ENCODE measurements at regions of chr12 and their contacts with region 1.

Region 1: DNA sequence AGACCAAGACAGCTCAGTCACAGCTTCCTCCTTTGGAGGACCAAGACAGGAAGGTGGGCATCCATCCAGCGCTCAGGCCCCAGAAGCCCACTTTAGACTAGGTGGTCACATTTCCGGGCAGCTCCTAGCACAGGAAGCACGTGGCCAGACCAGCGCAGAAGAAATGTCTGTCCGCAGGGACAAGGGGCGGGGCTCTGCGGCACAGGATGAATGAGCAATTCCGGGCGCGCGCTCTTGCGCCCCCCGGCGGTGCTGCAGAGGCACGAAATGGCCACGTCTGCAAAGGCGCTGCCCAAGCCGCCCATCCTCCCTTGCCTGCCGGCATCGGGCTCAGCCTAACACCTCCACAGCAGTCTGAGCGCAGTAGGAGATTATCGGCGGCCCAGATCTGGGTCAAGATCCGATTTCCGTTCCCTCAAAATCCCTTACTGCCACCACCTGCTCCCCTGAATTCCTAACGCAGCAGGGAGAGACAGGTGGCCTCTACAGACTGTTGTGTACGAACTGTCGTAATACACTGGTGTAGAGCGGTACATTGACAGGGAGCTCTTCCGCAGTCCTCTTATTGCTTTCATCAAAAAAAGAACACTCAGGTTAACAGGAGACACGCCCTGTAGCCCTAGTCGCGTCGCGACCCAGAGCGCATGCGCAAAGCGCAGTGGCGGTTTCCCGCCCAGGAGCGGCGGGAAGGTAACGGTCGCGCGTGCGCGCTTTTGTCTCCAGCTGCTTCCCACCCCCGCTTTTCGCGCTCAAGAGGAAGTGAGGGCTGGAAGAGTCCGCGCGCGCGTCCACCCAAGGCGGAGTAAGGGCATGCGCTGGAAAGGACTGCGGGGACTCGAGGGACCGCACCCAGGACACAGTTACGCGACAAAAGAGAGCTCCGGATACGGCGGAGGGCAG is 794 bp downstream of the TUBA1B start:
- DNase-seq: peak; percentile 85 to 98 (median 93)
- ATAC-seq: peak; percentile 75
- H3K4me3 ChIP-seq: peak overlapping the region; percentile 91
- H3K4me3 Mint-ChIP-seq: peak overlapping the region; percentile 99
- H3K27ac ChIP-seq: peak overlapping the region; percentile 94 to 98
- H3K27ac Mint-ChIP-seq: peak overlapping the region; percentile 98
- H3K4me1 ChIP-seq: peaks cover 33% of the 10 kb centered on the region
- H3K4me1 Mint-ChIP-seq: peaks cover 52% of the 10 kb centered on the region
- H3K27me3 ChIP-seq: no peaks in the 10 kb centered on the region
- H3K27me3 Mint-ChIP-seq: no peaks in the 10 kb centered on the region
- CTCF ChIP-seq: peak; percentile 90

Region 2: GRCh38 chr12:49018261-49019119 is 111.9 kb before region 1 on chr12 and contains the start of gene PRKAG1:
- CTCF ChIA-PET with region 1: no interaction called
- POLR2A ChIA-PET with region 1: interaction called, 11 read pairs
- intact Hi-C with region 1: no loop called
- DNase-seq: peak; percentile 94 to 99 (median 96)
- ATAC-seq: peak; percentile 90
- H3K4me3 ChIP-seq: peak within 1 kb of the TSS; percentile 73
- H3K4me3 Mint-ChIP-seq: peak within 1 kb of the TSS; percentile 97
- H3K27ac ChIP-seq: peak within 1 kb of the TSS; percentile 94 to 97
- H3K27ac Mint-ChIP-seq: peak within 1 kb of the TSS; percentile 99
- H3K4me1 ChIP-seq: peaks cover 27% of the 10 kb centered on the region
- H3K4me1 Mint-ChIP-seq: peaks cover 50% of the 10 kb centered on the region
- H3K27me3 ChIP-seq: no peaks in the 10 kb centered on the region
- H3K27me3 Mint-ChIP-seq: no peaks in the 10 kb centered on the region
- CTCF ChIP-seq: peak; percentile 60
- total RNA-seq, gene PRKAG1: 34.6 to 38.2 TPM

Region 3: DNA sequence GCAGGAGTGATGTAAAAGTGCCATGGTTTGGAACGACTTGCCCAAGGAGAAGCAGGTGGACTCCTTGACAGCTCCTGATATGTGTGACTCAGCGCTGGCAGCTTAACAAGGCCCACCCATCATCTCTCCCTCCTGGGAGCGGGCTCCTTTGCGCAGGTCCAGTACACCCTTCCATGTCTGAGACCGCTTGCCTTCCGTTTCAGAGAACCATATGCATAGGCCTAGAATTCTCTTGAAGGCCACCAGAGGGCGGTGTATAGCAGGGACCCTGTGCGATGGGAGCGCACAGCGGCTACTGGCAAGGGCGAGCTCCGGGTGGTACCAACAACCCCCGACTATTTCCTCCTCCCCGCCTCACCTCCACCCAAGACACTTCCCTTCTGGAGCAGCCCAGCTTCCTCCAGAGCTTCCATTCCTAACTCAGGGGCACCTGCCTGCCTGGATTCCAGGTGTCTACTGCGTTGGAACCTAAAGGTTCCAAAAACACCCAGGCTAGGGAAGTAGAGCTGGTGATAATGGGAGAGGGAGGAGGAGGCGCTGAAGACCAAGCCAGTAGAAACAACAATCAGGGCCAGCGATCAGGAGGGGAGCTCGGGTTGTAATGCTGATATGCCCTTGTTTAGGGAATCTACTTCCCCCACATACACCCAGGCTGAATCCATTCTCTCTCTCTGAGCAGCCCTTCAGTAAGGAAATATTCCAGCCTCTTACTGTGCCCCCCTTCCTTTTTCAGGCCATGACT is 42.0 kb before region 1 on chr12:
- CTCF ChIA-PET with region 1: interaction called, 24 read pairs
- POLR2A ChIA-PET with region 1: interaction called, 42 read pairs
- intact Hi-C with region 1: loop called (anchors 1 to 2 kb)
- DNase-seq: peak; percentile 43 to 90 (median 58)
- ATAC-seq: peak; percentile 82
- H3K4me3 ChIP-seq: no peak overlapping the region
- H3K4me3 Mint-ChIP-seq: peak overlapping the region; percentile 60
- H3K27ac ChIP-seq: no peak overlapping the region
- H3K27ac Mint-ChIP-seq: no peak overlapping the region
- H3K4me1 ChIP-seq: peaks cover 55% of the 10 kb centered on the region
- H3K4me1 Mint-ChIP-seq: peaks cover 52% of the 10 kb centered on the region
- H3K27me3 ChIP-seq: peaks cover 48 to 51% of the 10 kb centered on the region in 2 experiments
- H3K27me3 Mint-ChIP-seq: peaks cover 62% of the 10 kb centered on the region
- CTCF ChIP-seq: peak; percentile 85

Region 4: DNA sequence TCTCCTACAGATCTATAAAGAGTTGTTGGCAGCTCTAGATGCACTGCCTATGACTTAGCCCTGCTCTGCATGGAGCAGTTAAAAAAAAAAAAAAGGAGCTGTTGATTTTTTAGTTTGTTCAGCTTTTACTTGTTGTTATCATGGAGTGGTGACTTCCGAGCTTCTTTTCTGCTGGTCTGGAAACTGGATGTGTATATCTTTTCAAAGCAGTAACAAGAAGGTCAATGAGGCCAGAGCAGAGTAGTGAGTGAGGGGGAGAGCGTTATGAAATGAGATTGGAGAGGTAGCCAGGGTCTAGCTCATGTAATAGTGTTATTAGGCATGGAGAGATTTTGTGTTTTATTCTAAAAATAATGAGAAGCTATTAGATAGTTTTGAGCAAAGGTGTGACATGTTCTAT is 14.0 kb after region 1 on chr12:
- CTCF ChIA-PET with region 1: no interaction called
- POLR2A ChIA-PET with region 1: interaction called, 13 read pairs
- intact Hi-C with region 1: no loop called
- DNase-seq: no peak
- ATAC-seq: no peak
- H3K4me3 ChIP-seq: no peak overlapping the region
- H3K4me3 Mint-ChIP-seq: no peak overlapping the region
- H3K27ac ChIP-seq: no peak overlapping the region
- H3K27ac Mint-ChIP-seq: no peak overlapping the region
- H3K4me1 ChIP-seq: no peaks in the 10 kb centered on the region
- H3K4me1 Mint-ChIP-seq: no peaks in the 10 kb centered on the region
- H3K27me3 ChIP-seq: no peaks in the 10 kb centered on the region
- H3K27me3 Mint-ChIP-seq: no peaks in the 10 kb centered on the region
- CTCF ChIP-seq: no peak

Region 5: DNA sequence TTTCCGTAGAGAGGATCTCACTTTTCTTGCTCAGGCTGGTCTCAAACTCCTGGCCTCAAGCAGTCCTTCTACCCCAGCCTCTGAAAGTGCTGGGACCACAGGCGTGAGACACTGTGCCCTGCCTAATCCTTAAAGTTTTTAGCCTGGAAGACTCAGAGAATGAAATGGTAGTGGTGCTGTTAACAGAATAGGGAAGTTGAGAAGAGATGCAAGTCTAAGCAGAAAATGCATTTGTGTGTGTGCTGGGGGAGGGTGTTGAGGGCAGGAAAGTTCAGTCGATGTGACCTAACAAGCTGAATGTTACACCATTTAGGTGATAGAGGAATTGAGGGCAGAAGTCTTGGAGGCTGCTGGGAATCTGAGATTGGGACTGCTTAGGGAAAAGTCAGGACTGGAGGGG is 65.3 kb after region 1 on chr12:
- CTCF ChIA-PET with region 1: no interaction called
- POLR2A ChIA-PET with region 1: no interaction called
- intact Hi-C with region 1: no loop called
- DNase-seq: no peak
- ATAC-seq: no peak
- H3K4me3 ChIP-seq: no peak overlapping the region
- H3K4me3 Mint-ChIP-seq: no peak overlapping the region
- H3K27ac ChIP-seq: no peak overlapping the region
- H3K27ac Mint-ChIP-seq: no peak overlapping the region
- H3K4me1 ChIP-seq: no peaks in the 10 kb centered on the region
- H3K4me1 Mint-ChIP-seq: no peaks in the 10 kb centered on the region
- H3K27me3 ChIP-seq: peaks cover 0 to 3% of the 10 kb centered on the region in 2 experiments
- H3K27me3 Mint-ChIP-seq: no peaks in the 10 kb centered on the region
- CTCF ChIP-seq: no peak

Region 6: GRCh38 chr12:49264738-49265515 is 134.5 kb after region 1 on chr12 and contains the start of gene TUBA1C:
- CTCF ChIA-PET with region 1: no interaction called
- POLR2A ChIA-PET with region 1: interaction called, 16 read pairs
- intact Hi-C with region 1: no loop called
- DNase-seq: peak; percentile 60 to 91 (median 80)
- ATAC-seq: peak; percentile 80
- H3K4me3 ChIP-seq: peak within 1 kb of the TSS; percentile 86
- H3K4me3 Mint-ChIP-seq: peak within 1 kb of the TSS; percentile 99
- H3K27ac ChIP-seq: peak within 1 kb of the TSS; percentile 57 to 74
- H3K27ac Mint-ChIP-seq: peak within 1 kb of the TSS; percentile 92
- H3K4me1 ChIP-seq: peaks cover 38% of the 10 kb centered on the region
- H3K4me1 Mint-ChIP-seq: peaks cover 23% of the 10 kb centered on the region
- H3K27me3 ChIP-seq: no peaks in the 10 kb centered on the region
- H3K27me3 Mint-ChIP-seq: no peaks in the 10 kb centered on the region
- CTCF ChIP-seq: no peak
- total RNA-seq, gene TUBA1C: 23.4 to 28.9 TPM

Region 7: DNA sequence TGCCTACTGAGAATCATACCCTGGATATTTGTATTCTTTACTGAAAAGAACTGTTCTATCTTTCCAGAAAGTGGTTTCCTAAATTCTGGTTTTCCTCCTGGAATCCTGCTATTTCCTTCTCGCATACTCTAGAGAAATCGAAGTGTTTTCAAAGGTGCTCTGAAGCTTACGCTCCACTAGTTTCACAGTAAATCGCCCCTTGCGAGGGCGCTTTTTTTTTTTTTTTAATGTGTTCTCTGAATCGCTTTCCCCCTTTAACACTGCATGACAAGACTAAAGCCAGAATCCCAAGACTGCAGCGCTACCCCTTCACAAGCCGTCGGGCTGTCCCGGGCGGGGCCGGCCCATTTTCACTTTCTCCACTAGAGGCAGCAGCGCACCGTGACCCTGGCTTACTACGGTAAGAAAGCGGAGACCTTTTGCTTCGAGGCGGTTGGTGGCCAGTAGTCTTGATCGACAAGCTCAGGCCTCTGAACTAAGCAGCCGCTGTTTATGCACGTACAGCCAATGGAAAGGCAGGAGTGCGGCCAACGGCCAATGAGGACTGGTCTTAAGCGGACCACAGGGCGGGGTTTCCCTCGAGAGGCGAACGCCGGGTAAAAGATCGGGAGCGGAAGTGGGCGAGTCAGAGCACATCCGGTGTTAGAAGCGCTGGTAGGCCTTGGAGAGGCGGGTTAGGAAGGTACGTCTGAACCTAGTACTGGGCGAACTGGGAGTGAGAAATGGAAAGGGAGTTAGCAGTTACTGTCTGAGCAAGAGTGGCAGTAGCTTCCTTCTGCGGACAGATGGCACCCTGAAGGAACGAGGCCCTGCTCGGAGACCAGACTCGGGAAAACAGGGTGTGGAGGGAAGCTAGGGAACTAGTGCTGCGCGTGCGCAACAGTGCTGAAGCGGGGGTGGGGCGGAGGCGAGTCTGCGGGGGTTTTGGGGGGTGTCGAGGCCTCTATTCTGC is 610.8 kb after region 1 on chr12 and contains the start of gene TMBIM6:
- CTCF ChIA-PET with region 1: no interaction called
- POLR2A ChIA-PET with region 1: interaction called, 11 read pairs
- intact Hi-C with region 1: no loop called
- DNase-seq: peak; percentile 96 to 100 (median 98)
- ATAC-seq: peak; percentile 86
- H3K4me3 ChIP-seq: peak within 1 kb of the TSS; percentile 83
- H3K4me3 Mint-ChIP-seq: peak within 1 kb of the TSS; percentile 92
- H3K27ac ChIP-seq: peak within 1 kb of the TSS; percentile 99
- H3K27ac Mint-ChIP-seq: peak within 1 kb of the TSS; percentile 96
- H3K4me1 ChIP-seq: peaks cover 40% of the 10 kb centered on the region
- H3K4me1 Mint-ChIP-seq: peaks cover 47% of the 10 kb centered on the region
- H3K27me3 ChIP-seq: no peaks in the 10 kb centered on the region
- H3K27me3 Mint-ChIP-seq: no peaks in the 10 kb centered on the region
- CTCF ChIP-seq: peak; percentile 83
- total RNA-seq, gene TMBIM6: 274 to 279 TPM